Common myeloid progenitor, CD34-positive (primary cell): ENCODE measurements at regions of chr6 and their contacts with region 1.

Region 1: GRCh38 chr6:10478187-10479040 is 42.7 kb upstream of the GCNT2 start:
- DNase-seq: peak; percentile 47 to 55 (median 51)
- H3K4me3 ChIP-seq: no peak overlapping the region
- H3K27ac ChIP-seq: no peak overlapping the region
- H3K4me1 ChIP-seq: no peaks in the 10 kb centered on the region
- H3K27me3 ChIP-seq: no peaks in the 10 kb centered on the region

Region 2: GRCh38 chr6:10793695-10794094 is 315.3 kb after region 1 on chr6:
- CTCF ChIA-PET with region 1: interaction called, 12 read pairs
- POLR2A ChIA-PET with region 1: no interaction called
- DNase-seq: no peak
- H3K4me3 ChIP-seq: no peak overlapping the region
- H3K27ac ChIP-seq: no peak overlapping the region
- H3K4me1 ChIP-seq: no peaks in the 10 kb centered on the region
- H3K27me3 ChIP-seq: no peaks in the 10 kb centered on the region

Region 3: DNA sequence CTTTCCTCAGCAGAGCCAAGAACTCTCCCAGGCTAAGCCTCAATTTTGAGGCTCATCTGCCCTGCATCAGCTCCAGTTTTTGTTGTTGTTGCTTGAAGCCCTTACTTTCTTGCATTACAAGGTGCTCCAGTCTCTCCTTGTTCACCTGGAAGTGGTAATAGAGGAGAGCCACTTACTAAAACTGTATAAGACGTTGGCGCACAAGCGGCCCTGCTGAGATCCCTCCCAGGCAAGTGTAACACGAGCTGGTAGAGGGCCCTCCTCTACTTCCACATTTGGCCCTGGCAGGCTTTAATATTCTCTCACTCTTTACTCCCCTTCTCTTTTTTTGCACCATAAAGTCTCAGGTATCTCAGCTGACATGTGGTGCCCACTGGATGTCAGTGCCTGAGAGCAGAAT is 383.9 kb after region 1 on chr6:
- CTCF ChIA-PET with region 1: no interaction called
- POLR2A ChIA-PET with region 1: no interaction called
- DNase-seq: no peak
- H3K4me3 ChIP-seq: no peak overlapping the region
- H3K27ac ChIP-seq: no peak overlapping the region
- H3K4me1 ChIP-seq: no peaks in the 10 kb centered on the region
- H3K27me3 ChIP-seq: no peaks in the 10 kb centered on the region

Region 4: GRCh38 chr6:11277275-11278206 is 799.1 kb after region 1 on chr6:
- CTCF ChIA-PET with region 1: no interaction called
- POLR2A ChIA-PET with region 1: no interaction called
- DNase-seq: no peak
- H3K4me3 ChIP-seq: no peak overlapping the region
- H3K27ac ChIP-seq: no peak overlapping the region
- H3K4me1 ChIP-seq: peaks cover 0 to 15% (median 5%) of the 10 kb centered on the region in 4 experiments
- H3K27me3 ChIP-seq: no peaks in the 10 kb centered on the region